BJ (cell line): ENCODE measurements at regions of chr2 and their contacts with region 1.

Region 1: DNA sequence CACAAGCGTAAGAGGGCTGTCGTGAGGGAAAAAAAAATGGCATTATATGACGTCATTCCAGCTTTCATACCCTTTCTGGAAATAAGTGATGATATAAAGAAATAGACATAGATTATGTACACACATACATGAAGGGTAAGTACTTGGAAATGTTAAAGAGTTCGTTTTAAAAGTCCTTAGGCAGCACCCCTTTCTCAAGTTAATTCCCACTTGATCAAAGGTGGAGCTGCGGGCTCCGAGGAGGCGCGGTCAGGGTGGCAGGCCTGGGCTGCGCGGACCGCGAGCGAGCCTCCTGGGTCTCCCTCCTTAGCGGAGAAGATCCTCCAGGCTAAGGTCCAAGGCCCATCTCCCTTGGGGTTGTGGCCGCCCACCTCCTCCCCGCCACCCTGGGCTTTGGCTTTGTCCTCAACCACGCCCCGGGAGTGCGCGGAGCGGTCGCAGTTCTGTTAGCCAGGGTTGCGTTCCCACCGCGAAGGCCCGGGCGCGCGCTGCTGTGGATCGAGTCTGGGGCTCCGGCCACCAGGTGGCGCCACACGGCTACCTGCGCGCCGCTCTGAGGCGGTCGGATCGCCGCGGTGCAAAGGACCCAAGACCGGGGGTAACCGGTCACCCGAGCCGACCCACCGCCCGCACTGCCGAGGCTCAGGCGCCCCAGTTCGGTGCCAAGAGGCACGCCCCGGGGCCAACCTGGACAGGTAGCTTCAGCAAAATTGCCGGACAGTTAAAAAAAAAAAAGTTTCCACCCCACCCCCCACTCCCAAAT is 66.8 kb downstream of the HNRNPLL start:
- DNase-seq: no peak
- H3K4me3 ChIP-seq: peak overlapping the region; percentile 54
- H3K27me3 ChIP-seq: peaks cover 3% of the 10 kb centered on the region; the same call in 1 of the 2 replicates
- CTCF ChIP-seq: peak; percentile 88

Region 2: GRCh38 chr2:38185012-38185491 is 350.9 kb before region 1 on chr2:
- CTCF ChIA-PET with region 1: no interaction called
- POLR2A ChIA-PET with region 1: no interaction called
- DNase-seq: no peak
- H3K4me3 ChIP-seq: no peak overlapping the region
- H3K27me3 ChIP-seq: no peaks in the 10 kb centered on the region
- CTCF ChIP-seq: no peak

Region 3: GRCh38 chr2:38315707-38316333 is 220.1 kb before region 1 on chr2:
- CTCF ChIA-PET with region 1: interaction called, 7 read pairs
- POLR2A ChIA-PET with region 1: interaction called, 10 read pairs
- DNase-seq: no peak
- H3K4me3 ChIP-seq: no peak overlapping the region
- H3K27me3 ChIP-seq: no peaks in the 10 kb centered on the region
- CTCF ChIP-seq: peak; percentile 72

Region 4: GRCh38 chr2:38374984-38375383 is 160.9 kb before region 1 on chr2:
- CTCF ChIA-PET with region 1: no interaction called
- POLR2A ChIA-PET with region 1: no interaction called
- DNase-seq: no peak
- H3K4me3 ChIP-seq: no peak overlapping the region
- H3K27me3 ChIP-seq: no peaks in the 10 kb centered on the region
- CTCF ChIP-seq: no peak

Region 5: DNA sequence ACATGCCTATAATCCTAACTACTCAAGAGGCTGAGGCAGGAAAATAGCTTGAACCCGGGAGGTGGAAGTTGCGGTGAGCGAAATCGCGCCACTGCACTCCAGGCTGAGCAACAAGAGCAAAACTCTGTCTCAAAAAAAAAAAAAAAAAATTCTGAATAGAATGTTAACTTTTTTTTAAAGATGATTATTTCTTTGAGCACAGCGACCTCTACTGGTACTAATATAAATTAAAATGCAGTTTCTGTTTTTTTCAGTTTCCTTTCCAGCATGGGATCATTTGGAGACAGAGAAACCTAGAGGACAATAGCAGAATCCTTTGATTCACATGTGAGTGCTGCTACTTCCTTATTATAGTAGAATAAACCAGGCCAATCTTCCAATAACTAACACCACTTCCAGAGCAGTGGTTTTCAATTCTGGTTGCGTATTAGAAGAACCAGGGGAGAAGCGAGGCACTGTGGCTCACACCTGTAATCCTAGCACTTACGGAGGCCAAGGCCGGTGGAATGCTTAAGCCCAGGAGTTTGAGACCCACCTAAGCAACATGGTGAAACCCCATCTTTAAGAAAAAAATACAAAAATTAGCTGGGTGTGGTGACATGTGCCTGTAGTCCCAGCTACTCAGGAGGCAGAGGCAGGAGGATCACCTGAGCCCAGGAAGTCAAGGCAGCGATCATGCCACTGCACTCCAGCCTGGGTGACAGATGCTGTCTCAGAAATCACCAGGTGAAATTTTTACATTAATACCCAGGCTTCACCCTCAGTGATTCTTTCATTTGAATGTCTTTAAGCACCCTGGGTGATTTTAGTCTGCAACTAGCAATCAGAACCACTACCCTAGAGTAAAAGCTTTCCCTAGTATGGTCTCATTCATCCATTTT is 205.2 kb after region 1 on chr2:
- CTCF ChIA-PET with region 1: interaction called, 54 read pairs
- POLR2A ChIA-PET with region 1: no interaction called
- DNase-seq: no peak
- H3K4me3 ChIP-seq: no peak overlapping the region
- H3K27me3 ChIP-seq: no peaks in the 10 kb centered on the region
- CTCF ChIP-seq: peak; percentile 32